ENCODE measurements at regions of chr1 and their contacts with region 1.

Region 1: DNA sequence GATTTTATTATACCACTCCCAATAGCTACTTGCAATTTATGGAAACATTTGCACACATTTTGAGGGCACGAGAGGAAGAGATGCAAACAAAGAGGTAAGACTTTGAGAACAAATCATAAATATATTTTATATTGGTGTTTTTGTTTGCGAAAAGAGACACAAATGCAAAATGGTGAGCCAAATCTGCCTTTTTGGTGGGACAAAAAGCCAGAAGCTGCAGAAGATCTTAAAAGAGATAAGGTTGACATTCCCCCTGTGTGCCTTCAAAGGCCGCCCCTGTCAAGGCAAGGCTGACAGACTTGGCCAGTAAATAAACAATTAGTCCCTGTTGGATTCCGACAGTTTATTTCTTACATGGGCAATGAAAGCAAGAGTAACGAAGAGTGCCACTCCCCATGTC is 122.8 kb downstream of the LBR start:
- DNase-seq: no peak
- ATAC-seq: no peak
- H3K4me3 ChIP-seq: no peak overlapping the region
- H3K4me3 Mint-ChIP-seq: no peak overlapping the region
- H3K27ac ChIP-seq: no peak overlapping the region
- H3K27ac Mint-ChIP-seq: no peak overlapping the region
- H3K4me1 ChIP-seq: no peaks in the 10 kb centered on the region
- H3K4me1 Mint-ChIP-seq: no peaks in the 10 kb centered on the region
- H3K27me3 ChIP-seq: no peaks in the 10 kb centered on the region
- H3K27me3 Mint-ChIP-seq: no peaks in the 10 kb centered on the region
- CTCF ChIP-seq: no peak

Region 2: DNA sequence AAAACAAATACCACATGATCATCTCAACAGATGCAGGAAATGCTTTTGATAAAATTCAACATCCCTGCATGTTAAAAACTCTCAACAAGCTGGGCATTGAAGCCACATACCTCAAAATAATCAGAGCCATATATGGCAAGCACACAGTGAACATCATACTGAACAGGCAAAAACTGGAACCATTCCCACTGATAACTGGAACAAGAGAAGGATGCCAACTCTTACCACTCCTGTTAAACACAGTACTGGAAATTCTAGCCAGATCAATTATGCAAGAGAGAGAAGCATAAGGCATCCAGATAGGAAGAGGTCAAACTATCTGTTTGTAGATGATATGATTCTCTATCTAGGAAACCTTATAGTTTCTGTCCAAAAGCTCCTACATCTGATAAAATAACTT is 284.0 kb before region 1 on chr1:
- CTCF ChIA-PET with region 1: no interaction called
- POLR2A ChIA-PET with region 1: no interaction called
- intact Hi-C with region 1: no loop called
- DNase-seq: no peak
- ATAC-seq: no peak
- H3K4me3 ChIP-seq: no peak overlapping the region
- H3K4me3 Mint-ChIP-seq: no peak overlapping the region
- H3K27ac ChIP-seq: no peak overlapping the region
- H3K27ac Mint-ChIP-seq: no peak overlapping the region
- H3K4me1 ChIP-seq: no peaks in the 10 kb centered on the region
- H3K4me1 Mint-ChIP-seq: no peaks in the 10 kb centered on the region
- H3K27me3 ChIP-seq: no peaks in the 10 kb centered on the region
- H3K27me3 Mint-ChIP-seq: peaks cover 6% of the 10 kb centered on the region
- CTCF ChIP-seq: no peak

Region 3: GRCh38 chr1:225182716-225183115 is 122.3 kb before region 1 on chr1:
- CTCF ChIA-PET with region 1: no interaction called
- POLR2A ChIA-PET with region 1: no interaction called
- intact Hi-C with region 1: no loop called
- DNase-seq: no peak
- ATAC-seq: no peak
- H3K4me3 ChIP-seq: no peak overlapping the region
- H3K4me3 Mint-ChIP-seq: no peak overlapping the region
- H3K27ac ChIP-seq: no peak overlapping the region
- H3K27ac Mint-ChIP-seq: no peak overlapping the region
- H3K4me1 ChIP-seq: no peaks in the 10 kb centered on the region
- H3K4me1 Mint-ChIP-seq: no peaks in the 10 kb centered on the region
- H3K27me3 ChIP-seq: no peaks in the 10 kb centered on the region
- H3K27me3 Mint-ChIP-seq: no peaks in the 10 kb centered on the region
- CTCF ChIP-seq: no peak

Region 4: DNA sequence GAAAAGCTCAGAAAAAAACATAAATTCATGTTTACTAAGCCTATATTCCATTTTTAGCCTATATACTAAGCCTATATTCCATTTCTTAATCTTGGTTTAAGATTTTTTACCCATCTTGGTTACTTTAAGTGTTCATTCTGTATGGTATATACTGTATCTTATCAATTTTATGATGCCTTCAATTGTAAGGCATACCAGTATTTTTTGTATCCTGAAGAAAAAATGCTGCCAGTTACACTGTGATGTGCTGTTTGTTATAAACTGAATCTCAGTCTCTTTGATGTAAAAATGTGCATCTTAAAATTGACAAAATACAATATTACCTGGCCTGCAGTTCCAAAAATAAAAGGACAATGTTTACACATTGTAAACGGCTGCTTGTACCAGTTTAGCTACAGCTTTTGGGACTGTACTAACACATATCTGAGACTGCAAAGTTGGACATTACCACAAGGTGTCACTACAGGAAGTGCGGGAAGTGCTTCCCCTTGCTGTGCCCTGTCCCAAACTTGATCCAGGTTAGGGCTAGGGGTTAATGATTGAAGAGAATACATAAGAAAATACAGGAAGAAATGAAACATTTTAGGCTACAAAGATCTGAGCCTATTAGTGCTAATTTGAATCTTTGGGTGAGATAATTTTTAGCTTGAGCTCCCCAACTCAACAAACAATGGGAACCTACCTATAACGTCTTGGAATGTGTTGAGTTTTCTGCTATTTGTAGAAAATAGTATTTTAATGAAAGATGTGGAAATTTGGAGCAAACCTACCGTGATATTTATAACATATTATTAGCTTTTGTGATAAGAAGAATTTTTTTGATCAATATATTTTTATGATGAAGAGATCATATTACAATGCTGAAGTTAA is 13.9 kb after region 1 on chr1:
- CTCF ChIA-PET with region 1: interaction called, 17 read pairs
- POLR2A ChIA-PET with region 1: no interaction called
- intact Hi-C with region 1: no loop called
- DNase-seq: peak in 4 of 9 experiments; percentile 13 to 55 (median 32)
- ATAC-seq: peak; percentile 42
- H3K4me3 ChIP-seq: no peak overlapping the region
- H3K4me3 Mint-ChIP-seq: no peak overlapping the region
- H3K27ac ChIP-seq: no peak overlapping the region
- H3K27ac Mint-ChIP-seq: no peak overlapping the region
- H3K4me1 ChIP-seq: no peaks in the 10 kb centered on the region
- H3K4me1 Mint-ChIP-seq: no peaks in the 10 kb centered on the region
- H3K27me3 ChIP-seq: peaks cover 0 to 4% of the 10 kb centered on the region in 2 experiments
- H3K27me3 Mint-ChIP-seq: peaks cover 2% of the 10 kb centered on the region
- CTCF ChIP-seq: peak; percentile 69